ENCODE measurements at regions of chr7 and their contacts with region 1.

Region 1: GRCh38 chr7:95828824-95829790 is 56.8 kb downstream of the DYNC1I1 start:
- DNase-seq: no peak
- H3K4me3 Mint-ChIP-seq: no peak overlapping the region
- H3K27ac Mint-ChIP-seq: no peak overlapping the region
- H3K4me1 Mint-ChIP-seq: no peaks in the 10 kb centered on the region
- H3K27me3 Mint-ChIP-seq: no peaks in the 10 kb centered on the region

Region 2: GRCh38 chr7:95286096-95286495 is 543.0 kb before region 1 on chr7:
- CTCF ChIA-PET with region 1: no interaction called
- POLR2A ChIA-PET with region 1: no interaction called
- intact Hi-C with region 1: no loop called
- DNase-seq: no peak
- H3K4me3 Mint-ChIP-seq: no peak overlapping the region
- H3K27ac Mint-ChIP-seq: no peak overlapping the region
- H3K4me1 Mint-ChIP-seq: no peaks in the 10 kb centered on the region
- H3K27me3 Mint-ChIP-seq: peaks cover 7% of the 10 kb centered on the region

Region 3: DNA sequence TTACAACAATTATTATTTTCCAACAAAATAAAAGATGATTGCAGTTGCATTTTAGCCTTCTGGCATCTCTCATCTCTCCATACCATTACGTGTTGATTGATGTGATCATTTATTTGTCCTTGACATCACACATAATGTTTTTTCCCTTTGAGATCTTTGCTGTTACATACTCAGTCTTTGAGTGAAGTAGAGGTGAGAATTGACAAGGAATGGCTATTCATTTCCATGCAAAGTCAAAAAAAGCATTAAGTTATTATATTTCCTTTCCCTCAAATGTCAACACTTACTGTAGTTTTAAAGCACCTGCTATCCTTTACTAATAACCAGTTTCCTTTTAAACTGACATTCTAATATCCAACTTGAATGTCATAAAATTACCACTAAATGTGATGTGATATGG is 23.2 kb before region 1 on chr7:
- CTCF ChIA-PET with region 1: no interaction called
- POLR2A ChIA-PET with region 1: no interaction called
- intact Hi-C with region 1: loop called (anchors 1 kb)
- DNase-seq: no peak
- H3K4me3 Mint-ChIP-seq: no peak overlapping the region
- H3K27ac Mint-ChIP-seq: no peak overlapping the region
- H3K4me1 Mint-ChIP-seq: no peaks in the 10 kb centered on the region
- H3K27me3 Mint-ChIP-seq: no peaks in the 10 kb centered on the region